GM10248 (cell line): ENCODE measurements at regions of chr12 and their contacts with region 1.

Region 1: DNA sequence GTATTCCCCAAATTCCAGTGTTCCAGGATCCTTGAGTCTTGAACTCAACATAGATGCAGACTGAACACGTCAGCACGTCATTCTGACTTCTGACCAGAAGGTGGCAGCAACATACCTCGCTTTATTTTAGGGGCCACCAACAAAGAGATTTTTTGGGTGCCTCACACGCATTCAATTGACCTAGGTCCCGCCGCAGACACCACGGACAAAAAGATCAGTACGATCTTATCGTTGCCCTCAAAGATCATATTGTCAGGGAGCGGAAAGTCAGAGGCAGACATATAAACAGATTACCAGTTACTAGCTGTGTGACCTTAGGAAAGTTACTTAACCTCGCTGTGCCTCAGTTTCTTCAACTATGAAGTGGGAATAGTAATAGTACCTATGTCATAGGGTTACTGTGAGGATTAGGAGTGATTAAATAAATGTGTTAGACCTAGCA is 6.5 kb upstream of the PRPH start:
- DNase-seq: peak; percentile 81
- CTCF ChIP-seq: peak; percentile 82

Region 2: GRCh38 chr12:49304161-49304560 is 15.7 kb after region 1 on chr12:
- CTCF ChIA-PET with region 1: interaction called, 35 read pairs
- POLR2A ChIA-PET with region 1: no interaction called
- DNase-seq: no peak
- CTCF ChIP-seq: no peak

Region 3: DNA sequence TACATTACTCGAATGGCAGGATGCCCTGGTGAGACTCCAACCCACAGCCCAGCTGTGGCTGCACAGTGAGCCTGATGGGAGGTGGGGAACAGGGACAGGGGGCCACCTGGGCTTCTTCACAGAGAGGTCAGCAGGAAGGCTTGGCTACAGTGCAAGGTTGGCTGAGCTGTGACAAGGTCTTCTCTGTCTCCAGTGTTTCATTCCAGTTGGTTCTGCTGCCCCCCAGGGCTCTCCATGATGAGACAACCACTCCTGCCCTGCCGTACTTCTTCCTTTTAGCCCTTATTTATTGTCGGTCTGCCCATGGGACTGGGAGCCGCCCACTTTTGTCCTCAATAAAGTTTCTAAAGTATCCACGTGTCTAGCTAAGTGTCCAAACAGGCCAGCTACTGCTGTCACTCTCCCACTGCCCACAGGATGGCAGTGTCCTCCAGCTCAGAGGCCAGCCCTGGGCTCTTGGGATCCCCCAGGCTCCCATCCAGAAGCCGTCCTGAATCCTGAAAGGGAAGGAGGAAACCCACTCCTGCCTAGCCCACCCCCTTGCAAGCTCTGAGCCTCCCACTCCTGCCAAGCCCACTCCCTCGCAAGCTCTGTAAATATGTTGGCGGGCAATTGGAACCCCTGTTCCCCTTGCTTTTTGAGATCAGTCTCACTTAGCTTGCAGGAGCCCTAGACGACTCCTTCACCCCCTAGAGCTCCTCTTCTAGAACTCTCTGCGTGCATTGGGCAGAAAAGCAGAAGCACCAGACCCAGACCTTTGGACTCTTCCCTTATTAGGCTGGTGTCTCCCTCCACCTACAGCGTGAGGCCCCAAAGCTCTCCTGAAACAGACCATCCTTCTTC is 43.2 kb after region 1 on chr12:
- CTCF ChIA-PET with region 1: interaction called, 57 read pairs
- POLR2A ChIA-PET with region 1: no interaction called
- DNase-seq: peak; percentile 16
- CTCF ChIP-seq: peak; percentile 70

Region 4: GRCh38 chr12:49342066-49342913 is 53.9 kb after region 1 on chr12:
- CTCF ChIA-PET with region 1: interaction called, 239 read pairs
- POLR2A ChIA-PET with region 1: no interaction called
- DNase-seq: peak; percentile 87
- CTCF ChIP-seq: peak; percentile 81

Region 5: GRCh38 chr12:49366652-49367380 is 78.4 kb after region 1 on chr12:
- CTCF ChIA-PET with region 1: interaction called, 12 read pairs
- POLR2A ChIA-PET with region 1: no interaction called
- DNase-seq: peak; percentile 95
- CTCF ChIP-seq: no peak

Region 6: DNA sequence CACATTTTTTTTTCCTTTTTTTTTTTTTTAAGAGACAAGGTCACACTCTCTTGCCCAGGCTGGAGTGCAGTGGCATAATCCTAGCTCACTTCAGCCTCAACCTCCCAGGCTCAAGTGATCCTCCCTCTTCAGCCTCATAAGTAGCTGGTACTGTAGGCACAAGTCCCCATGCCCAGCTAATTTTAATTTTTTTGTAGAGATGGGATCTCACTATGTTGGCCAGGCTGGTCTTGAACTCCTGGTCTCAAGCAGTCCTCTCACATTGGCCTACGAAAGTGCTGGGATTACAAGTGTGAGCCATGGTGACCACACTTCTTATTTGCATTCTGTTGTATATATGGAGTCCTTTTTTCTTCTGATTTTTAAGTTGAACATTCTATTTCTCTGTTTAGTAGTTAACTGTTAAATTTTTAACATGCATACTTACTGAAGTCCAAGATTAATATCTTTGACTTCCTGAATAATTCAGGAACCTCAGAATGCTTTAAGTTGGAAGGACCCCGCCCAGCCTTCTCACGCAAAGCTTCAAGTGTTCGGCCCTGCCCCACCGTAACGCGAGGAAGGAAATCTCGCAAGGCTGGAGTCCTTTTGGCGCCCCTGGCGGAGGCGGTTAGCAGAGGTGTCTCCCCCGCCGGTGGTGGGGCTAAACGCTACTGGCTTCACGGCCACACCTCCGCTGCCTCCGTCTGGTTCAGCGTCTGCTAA is 100.4 kb after region 1 on chr12:
- CTCF ChIA-PET with region 1: no interaction called
- POLR2A ChIA-PET with region 1: no interaction called
- DNase-seq: peak; percentile 45
- CTCF ChIP-seq: peak; percentile 27

Region 7: DNA sequence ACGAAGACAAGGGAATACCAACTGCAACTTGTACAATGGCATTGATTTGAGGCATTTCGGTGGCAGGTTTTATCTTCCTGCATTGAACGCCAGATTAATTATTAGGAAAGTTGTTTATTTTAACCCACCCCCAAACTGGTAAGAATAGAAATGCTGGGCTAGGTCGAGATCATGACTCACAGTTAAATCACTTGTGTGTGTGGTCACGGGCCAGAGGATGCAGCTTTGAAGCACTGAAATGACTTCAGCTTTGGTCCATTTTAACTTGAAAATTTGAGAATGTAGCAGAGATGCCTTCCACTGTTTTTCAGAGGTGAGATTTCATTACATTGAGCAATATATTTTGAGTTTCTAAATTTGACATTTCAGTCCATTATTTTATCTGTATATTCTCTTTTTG is 226.8 kb after region 1 on chr12:
- CTCF ChIA-PET with region 1: interaction called, 13 read pairs
- POLR2A ChIA-PET with region 1: no interaction called
- DNase-seq: no peak
- CTCF ChIP-seq: no peak